ENCODE measurements at regions of chr17 and their contacts with region 1.

Region 1: GRCh38 chr17:67602956-67603355 is 114.8 kb upstream of the NOL11 start:
- DNase-seq: peak; percentile 79
- CTCF ChIP-seq: peak; percentile 79

Region 2: GRCh38 chr17:67559377-67559966 is 43.5 kb before region 1 on chr17:
- CTCF ChIA-PET with region 1: interaction called, 33 read pairs
- POLR2A ChIA-PET with region 1: no interaction called
- DNase-seq: no peak
- CTCF ChIP-seq: peak; percentile 47

Region 3: DNA sequence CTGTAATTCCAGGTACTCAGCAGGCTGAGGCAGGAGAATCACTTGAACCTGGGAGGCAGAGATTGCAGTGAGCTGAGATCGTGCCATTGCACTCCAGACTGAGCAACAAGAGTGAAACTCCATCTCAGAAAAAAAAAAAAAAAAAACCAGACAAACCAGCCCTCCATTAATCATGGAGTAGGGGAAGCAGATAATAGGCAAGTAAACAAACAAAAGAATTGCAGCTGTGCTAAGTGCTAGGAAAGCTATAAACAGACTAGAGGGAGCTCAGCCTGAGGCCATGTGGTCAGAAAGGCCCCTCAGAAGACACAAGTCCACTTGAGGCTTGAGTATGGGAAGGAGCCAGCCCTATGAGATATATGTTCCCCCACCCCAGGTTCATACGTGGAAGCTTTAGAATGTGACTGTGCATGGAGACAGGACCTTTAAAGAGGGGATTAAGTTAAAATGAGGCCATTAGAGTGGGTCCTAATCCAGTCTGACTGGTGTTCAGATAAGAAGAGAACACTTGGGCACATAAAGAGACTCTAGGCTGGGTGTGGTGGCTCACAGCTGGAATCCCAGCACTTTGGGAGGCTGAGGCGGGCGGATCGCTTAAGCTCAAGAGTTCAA is 17.9 kb before region 1 on chr17:
- CTCF ChIA-PET with region 1: interaction called, 14 read pairs
- POLR2A ChIA-PET with region 1: interaction called, 5 read pairs
- DNase-seq: no peak
- CTCF ChIP-seq: no peak

Region 4: GRCh38 chr17:67629971-67630320 is 27.0 kb after region 1 on chr17:
- CTCF ChIA-PET with region 1: interaction called, 17 read pairs
- POLR2A ChIA-PET with region 1: no interaction called
- DNase-seq: peak; percentile 43
- CTCF ChIP-seq: peak; percentile 28

Region 5: DNA sequence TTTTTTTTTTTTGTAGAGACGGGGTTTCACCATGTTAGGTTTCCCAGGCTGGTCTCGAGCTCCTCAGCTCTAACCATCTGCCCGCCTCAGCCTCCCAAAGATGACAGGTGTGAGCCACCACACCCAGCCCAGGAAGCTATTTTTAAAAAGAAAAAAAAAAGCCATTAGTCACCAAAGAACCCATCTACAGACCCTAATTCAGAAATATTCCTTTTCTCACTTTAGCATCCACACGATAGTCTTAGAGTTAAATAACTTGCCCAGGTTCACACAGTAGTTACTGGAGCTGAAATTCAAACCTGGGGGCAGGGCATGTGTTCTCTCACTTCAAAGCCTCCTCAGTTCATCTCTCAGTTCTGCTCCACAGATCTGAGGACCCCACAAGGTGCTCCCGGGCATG is 44.5 kb after region 1 on chr17:
- CTCF ChIA-PET with region 1: interaction called, 11 read pairs
- POLR2A ChIA-PET with region 1: no interaction called
- DNase-seq: no peak
- CTCF ChIP-seq: no peak